Naive thymus-derived CD4-positive, alpha-beta T cell (primary cell): ENCODE measurements at regions of chr5 and their contacts with region 1.

Region 1: GRCh38 chr5:61331407-61332357 is at the start of gene ZSWIM6:
- DNase-seq: peak; percentile 96 to 99 (median 97)
- ATAC-seq: peak; percentile 90
- H3K4me3 ChIP-seq: peak within 1 kb of the TSS; percentile 86
- H3K4me3 Mint-ChIP-seq: peak within 1 kb of the TSS; percentile 87 to 98 (median 94)
- H3K27ac ChIP-seq: peak within 1 kb of the TSS; percentile 91
- H3K27ac Mint-ChIP-seq: peak within 1 kb of the TSS; percentile 81 to 98 (median 95)
- H3K4me1 ChIP-seq: peaks cover 15 to 29% of the 10 kb centered on the region in 2 donors
- H3K4me1 Mint-ChIP-seq: peaks cover 22 to 44% (median 31%) of the 10 kb centered on the region in 7 donors
- H3K27me3 ChIP-seq: no peaks in the 10 kb centered on the region
- H3K27me3 Mint-ChIP-seq: peaks cover 7 to 52% (median 19%) of the 10 kb centered on the region in 5 donors
- total RNA-seq, gene ZSWIM6: 4.2 to 18.5 (median 11.5) TPM

Region 2: DNA sequence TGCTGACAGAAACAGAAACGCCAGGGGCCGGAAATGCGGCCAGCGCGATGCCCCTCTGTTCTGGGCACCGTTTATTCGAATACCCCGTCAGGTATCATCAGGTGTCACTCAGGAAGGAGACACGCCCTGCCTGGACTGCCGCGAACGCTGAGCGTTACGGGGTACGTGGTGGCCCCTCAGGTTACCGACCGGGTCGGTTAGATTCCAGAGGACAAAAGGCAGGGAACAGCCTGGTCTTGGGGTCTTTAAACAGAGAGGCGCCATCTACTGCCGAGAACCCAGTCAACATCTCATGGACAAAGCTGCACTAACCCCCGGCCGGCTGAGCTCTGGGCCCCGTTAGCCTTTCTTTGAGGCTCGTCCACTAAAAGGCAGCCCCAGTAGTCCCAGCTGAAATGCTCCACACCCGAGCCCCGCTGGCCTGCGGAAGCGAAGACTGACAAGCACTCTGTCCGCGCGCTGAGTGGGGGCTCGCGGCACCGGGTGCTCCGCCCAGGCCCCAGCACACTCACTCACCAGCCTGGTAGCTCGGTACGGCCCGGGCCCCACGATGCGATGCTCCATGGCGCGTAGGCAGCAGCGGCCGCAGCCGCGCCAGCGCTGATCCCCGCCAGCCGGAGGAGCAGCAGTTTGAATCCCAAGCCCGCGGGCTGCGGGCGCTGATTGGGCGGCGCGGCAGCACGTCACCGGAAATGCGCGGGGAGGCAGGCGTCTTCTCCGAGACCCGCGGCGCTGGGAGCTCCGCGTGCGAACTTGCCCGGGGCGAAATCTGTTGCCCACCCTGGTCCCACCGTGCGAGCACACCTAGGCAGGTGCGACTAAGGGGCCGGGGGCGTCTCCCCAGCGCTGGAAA is 631.9 kb before region 1 on chr5 and contains the start of gene DEPDC1B:
- CTCF ChIA-PET with region 1: no interaction called
- POLR2A ChIA-PET with region 1: interaction called, 3 read pairs
- intact Hi-C with region 1: loop called (anchors 2 kb)
- DNase-seq: peak; percentile 68 to 92 (median 82)
- ATAC-seq: peak; percentile 93
- H3K4me3 ChIP-seq: peak within 1 kb of the TSS; percentile 97
- H3K4me3 Mint-ChIP-seq: peak within 1 kb of the TSS; percentile 87 to 99 (median 92)
- H3K27ac ChIP-seq: peak within 1 kb of the TSS; percentile 68
- H3K27ac Mint-ChIP-seq: peak within 1 kb of the TSS in 8 of 9 donors; percentile 61 to 91 (median 76)
- H3K4me1 ChIP-seq: peaks cover 0 to 8% of the 10 kb centered on the region in 2 donors
- H3K4me1 Mint-ChIP-seq: peaks cover 6 to 39% (median 19%) of the 10 kb centered on the region in 7 donors
- H3K27me3 ChIP-seq: no peaks in the 10 kb centered on the region
- H3K27me3 Mint-ChIP-seq: peaks cover 0 to 35% (median 0%) of the 10 kb centered on the region in 5 donors
- total RNA-seq, gene DEPDC1B: 0.24 to 24.0 (median 0.31) TPM in 4 of 5 experiments, not detected in the other

Region 3: DNA sequence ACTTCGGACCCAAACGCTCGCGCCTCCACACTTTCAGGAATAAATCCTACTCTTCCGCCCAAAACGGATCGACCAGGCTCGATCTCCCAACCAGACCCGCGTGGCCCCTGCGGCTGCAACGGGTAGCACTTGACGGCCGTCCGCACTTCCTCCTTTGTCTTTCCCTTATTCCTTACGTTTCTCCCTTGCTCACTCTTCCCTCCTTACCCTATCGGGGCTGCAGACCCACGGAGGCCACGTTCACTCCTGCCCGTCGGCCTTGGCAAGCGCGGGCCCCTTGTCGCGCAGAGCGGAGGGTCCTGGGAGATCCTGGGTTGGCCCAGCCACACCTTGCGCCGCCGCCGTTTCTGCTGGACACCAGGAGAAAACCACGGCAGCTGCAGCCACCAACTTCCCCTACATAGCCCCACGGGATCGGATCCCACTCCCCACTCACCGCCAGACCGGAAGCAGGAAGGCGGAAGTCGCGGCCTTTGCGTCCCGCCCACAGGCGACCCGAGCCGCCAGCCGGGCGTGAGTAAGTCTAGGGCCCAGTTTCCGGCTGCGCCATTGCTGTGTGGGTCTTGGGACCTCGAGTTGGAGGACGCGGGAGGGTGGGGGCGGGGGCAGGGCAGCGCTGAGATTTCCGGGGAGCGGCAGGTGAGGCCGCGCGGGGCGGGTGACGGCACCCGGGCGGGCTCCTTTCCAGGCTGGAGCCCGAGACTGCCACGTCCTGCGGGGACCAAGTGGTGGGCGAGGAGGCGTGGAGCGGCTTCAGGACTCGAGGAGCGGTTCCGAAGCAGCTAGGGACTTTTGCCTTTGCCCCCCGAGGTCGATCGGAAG is 169.5 kb before region 1 on chr5 and contains the start of gene SMIM15:
- CTCF ChIA-PET with region 1: no interaction called
- POLR2A ChIA-PET with region 1: interaction called, 18 read pairs
- intact Hi-C with region 1: loop called (anchors 1 kb)
- DNase-seq: peak; percentile 59 to 85 (median 70)
- ATAC-seq: peak; percentile 93
- H3K4me3 ChIP-seq: peak within 1 kb of the TSS; percentile 87
- H3K4me3 Mint-ChIP-seq: peak within 1 kb of the TSS; percentile 92 to 98 (median 94)
- H3K27ac ChIP-seq: peak within 1 kb of the TSS; percentile 77
- H3K27ac Mint-ChIP-seq: peak within 1 kb of the TSS; percentile 80 to 98 (median 95)
- H3K4me1 ChIP-seq: peaks cover 8 to 16% of the 10 kb centered on the region in 2 donors
- H3K4me1 Mint-ChIP-seq: peaks cover 5 to 57% (median 46%) of the 10 kb centered on the region in 7 donors
- H3K27me3 ChIP-seq: no peaks in the 10 kb centered on the region
- H3K27me3 Mint-ChIP-seq: no peaks in the 10 kb centered on the region
- total RNA-seq, gene SMIM15: 17.3 to 49.0 (median 34.0) TPM

Region 4: DNA sequence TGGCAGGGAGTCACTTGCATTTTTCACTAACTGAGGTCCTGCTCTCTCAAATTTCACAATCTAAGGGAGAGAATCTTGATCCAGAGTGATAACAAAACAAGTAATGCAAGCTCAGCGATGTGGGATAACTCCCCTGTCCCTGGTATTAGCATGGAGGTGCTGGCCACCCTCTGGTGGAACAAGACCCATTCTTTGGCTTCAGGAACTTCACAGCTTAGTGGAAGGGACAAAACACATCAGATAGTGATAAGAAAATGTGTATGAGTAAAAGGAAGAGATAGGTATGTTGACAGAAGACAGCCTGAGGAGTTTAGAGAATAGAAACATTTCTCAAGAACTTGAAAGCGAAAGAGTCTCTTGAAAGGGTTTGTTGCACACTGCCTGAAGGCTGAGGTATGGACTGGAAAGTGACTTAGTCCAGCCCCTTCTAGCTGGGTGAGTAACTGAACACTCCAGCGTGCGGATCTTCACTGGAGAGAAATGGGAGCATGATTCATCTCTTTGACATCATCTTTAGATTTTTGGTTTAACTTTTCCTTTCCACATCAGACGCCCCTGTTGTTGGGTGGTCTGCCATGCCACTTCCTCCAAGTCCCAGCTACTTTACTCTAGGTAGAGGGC is 25.1 kb before region 1 on chr5:
- CTCF ChIA-PET with region 1: no interaction called
- POLR2A ChIA-PET with region 1: interaction called, 3 read pairs
- intact Hi-C with region 1: loop called in 1 of 2 experiments (anchors 2 kb)
- DNase-seq: peak in 1 of 9 donors; percentile 30
- ATAC-seq: peak; percentile 47
- H3K4me3 ChIP-seq: no peak overlapping the region
- H3K4me3 Mint-ChIP-seq: peak overlapping the region in 1 of 10 donors; percentile 61
- H3K27ac ChIP-seq: no peak overlapping the region
- H3K27ac Mint-ChIP-seq: peak overlapping the region in 1 of 9 donors; percentile 82
- H3K4me1 ChIP-seq: no peaks in the 10 kb centered on the region
- H3K4me1 Mint-ChIP-seq: peaks cover 0 to 21% (median 0%) of the 10 kb centered on the region in 7 donors
- H3K27me3 ChIP-seq: no peaks in the 10 kb centered on the region
- H3K27me3 Mint-ChIP-seq: peaks cover 2 to 41% (median 22%) of the 10 kb centered on the region in 5 donors

Region 5: DNA sequence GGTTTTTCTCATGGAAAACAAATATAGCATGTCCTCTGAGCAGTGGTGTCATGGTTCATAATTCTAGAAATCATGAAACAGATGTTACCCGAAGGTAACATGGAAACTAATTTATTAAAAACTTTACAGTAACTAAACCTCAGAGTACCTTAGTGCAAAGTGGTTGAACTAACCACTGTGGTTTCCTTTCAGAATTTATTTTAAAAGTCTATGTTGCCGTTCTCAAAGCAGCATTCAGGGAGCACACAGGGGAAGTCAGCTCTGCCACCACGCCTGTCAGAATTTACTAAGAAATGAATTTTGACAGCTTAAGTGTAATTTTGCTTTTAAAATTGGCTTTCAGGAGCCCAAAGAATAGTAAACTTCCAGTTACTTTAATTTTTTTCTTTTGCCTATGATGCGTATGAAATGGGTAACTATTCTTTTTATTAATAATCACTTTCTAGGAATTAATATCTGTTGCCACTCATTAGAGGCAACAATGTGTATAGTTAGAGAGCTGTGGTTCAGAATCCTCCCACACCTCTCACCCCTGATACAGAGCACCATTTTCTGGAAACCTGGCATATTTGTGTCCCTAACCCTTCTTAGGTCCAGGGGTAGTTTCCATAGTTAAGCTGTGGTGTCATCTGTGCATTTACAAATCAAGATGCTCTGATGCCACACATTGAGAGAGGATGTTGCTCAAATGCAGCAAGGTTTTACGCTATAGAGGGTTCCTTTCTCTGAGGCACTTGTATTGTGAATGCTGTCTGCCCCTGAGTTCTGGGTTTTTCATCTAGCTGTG is 203.0 kb after region 1 on chr5:
- CTCF ChIA-PET with region 1: no interaction called
- POLR2A ChIA-PET with region 1: no interaction called
- intact Hi-C with region 1: loop called in 1 of 2 experiments (anchors 5 kb)
- DNase-seq: peak in 4 of 9 donors; percentile 1 to 14 (median 3)
- ATAC-seq: peak; percentile 42
- H3K4me3 ChIP-seq: no peak overlapping the region
- H3K4me3 Mint-ChIP-seq: peak overlapping the region in 2 of 10 donors; percentile 30 to 45
- H3K27ac ChIP-seq: no peak overlapping the region
- H3K27ac Mint-ChIP-seq: peak overlapping the region in 3 of 9 donors; percentile 17 to 46 (median 31)
- H3K4me1 ChIP-seq: peaks cover 0 to 9% of the 10 kb centered on the region in 2 donors
- H3K4me1 Mint-ChIP-seq: peaks cover 0 to 17% (median 10%) of the 10 kb centered on the region in 7 donors
- H3K27me3 ChIP-seq: no peaks in the 10 kb centered on the region
- H3K27me3 Mint-ChIP-seq: no peaks in the 10 kb centered on the region

Region 6: DNA sequence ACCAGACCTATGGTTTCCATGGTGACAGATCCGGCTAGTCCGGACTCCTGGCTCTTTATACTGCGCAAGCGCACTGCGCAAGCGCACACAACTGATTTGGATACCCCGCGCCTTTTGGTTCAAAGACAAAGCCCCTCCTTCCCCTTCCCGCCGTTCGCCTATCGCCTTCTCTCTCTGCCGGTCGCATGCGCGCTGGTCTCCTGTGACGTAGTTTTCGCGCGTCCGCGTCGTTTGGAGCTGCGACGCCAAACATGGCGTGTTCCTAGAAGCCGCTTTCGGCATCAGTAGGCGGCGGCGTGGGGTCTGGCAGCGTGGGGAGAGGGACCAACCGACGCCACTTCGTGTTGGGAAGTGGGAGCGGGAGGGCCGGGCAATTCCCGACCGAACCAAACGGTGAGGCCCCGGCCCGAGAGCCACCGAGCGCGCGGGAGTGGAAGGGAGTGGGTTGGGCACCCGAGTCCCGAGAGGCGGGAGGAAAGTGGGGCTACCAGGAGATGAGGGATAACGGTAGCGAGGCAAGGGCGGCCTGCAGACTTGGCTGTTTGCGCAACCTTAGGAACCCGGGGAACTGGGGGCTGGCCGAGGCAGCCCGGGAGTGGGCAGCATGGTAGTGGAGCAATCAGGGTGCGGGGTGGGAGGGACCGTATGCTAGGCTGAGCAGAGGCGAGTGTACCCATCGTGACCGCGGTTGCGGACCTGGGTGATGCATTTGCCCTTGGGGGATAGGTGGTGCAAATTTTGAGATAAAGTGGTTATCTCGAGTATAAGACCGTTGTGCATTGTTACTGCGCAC is 1081.1 kb after region 1 on chr5 and contains the start of gene IPO11:
- CTCF ChIA-PET with region 1: no interaction called
- POLR2A ChIA-PET with region 1: no interaction called
- intact Hi-C with region 1: loop called (anchors 1 to 2 kb)
- DNase-seq: peak; percentile 97 to 98 (median 98)
- ATAC-seq: peak; percentile 96
- H3K4me3 ChIP-seq: peak within 1 kb of the TSS; percentile 91
- H3K4me3 Mint-ChIP-seq: peak within 1 kb of the TSS; percentile 81 to 97 (median 92)
- H3K27ac ChIP-seq: peak within 1 kb of the TSS; percentile 80
- H3K27ac Mint-ChIP-seq: peak within 1 kb of the TSS; percentile 87 to 96 (median 93)
- H3K4me1 ChIP-seq: peaks cover 11 to 12% of the 10 kb centered on the region in 2 donors
- H3K4me1 Mint-ChIP-seq: peaks cover 8 to 39% (median 29%) of the 10 kb centered on the region in 7 donors
- H3K27me3 ChIP-seq: no peaks in the 10 kb centered on the region
- H3K27me3 Mint-ChIP-seq: peaks cover 0 to 7% (median 0%) of the 10 kb centered on the region in 5 donors
- total RNA-seq, gene IPO11: 22.1 to 29.0 (median 27.7) TPM